ENCODE measurements at regions of chr5 and their contacts with region 1.

Region 1: DNA sequence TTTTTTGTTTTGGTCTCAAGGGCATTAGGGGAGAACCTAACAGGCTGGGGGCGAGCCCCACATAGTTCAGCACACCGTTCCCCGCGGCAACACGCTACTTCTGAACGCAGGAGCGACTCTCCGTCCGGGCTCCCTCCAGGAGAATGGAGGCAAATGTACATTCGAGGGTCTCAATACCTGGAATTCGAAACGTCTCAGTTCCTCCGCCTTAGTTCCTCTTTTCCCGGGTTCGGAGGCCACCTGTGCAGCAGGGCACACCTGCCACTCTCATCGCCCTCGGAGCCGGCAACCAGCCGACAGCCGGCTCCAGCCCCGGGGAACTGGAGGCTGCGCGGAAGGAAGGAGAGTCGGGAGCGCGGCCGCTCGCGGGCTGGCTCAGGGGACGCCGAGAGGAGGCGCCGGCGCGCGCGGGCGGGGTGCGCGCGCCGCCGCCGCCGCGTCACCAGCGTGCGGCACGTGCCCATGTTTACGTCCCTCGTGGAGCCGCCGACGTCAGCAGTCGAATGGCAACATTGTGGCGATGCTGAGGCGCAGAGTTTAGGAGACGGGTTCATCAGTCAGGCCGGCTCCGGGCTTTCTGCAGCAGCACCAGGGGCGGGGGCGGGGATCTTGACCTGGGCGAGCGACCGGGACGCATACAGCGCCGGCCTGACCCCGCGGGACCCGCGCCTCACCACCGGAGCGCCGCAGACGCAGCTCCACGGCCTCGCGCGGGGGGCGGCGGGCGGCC is at the start of gene JMY:
- DNase-seq: peak; percentile 80
- H3K4me3 ChIP-seq: peak within 1 kb of the TSS; percentile 68 to 90 (median 87)
- H3K27ac ChIP-seq: peak within 1 kb of the TSS; percentile 76
- H3K4me1 ChIP-seq: no peaks in the 10 kb centered on the region
- H3K27me3 ChIP-seq: no peaks in the 10 kb centered on the region
- CTCF ChIP-seq: no peak
- total RNA-seq, gene JMY: 7.5 to 16.8 TPM

Region 2: GRCh38 chr5:79200573-79201183 is 35.1 kb before region 1 on chr5:
- CTCF ChIA-PET with region 1: no interaction called
- dilution Hi-C with region 1: no loop called
- in situ Hi-C with region 1: no loop called
- intact Hi-C with region 1: loop called (anchors 2 kb)
- DNase-seq: no peak
- H3K4me3 ChIP-seq: no peak overlapping the region
- H3K27ac ChIP-seq: no peak overlapping the region
- H3K4me1 ChIP-seq: no peaks in the 10 kb centered on the region
- H3K27me3 ChIP-seq: no peaks in the 10 kb centered on the region
- CTCF ChIP-seq: peak; percentile 45 to 46

Region 3: DNA sequence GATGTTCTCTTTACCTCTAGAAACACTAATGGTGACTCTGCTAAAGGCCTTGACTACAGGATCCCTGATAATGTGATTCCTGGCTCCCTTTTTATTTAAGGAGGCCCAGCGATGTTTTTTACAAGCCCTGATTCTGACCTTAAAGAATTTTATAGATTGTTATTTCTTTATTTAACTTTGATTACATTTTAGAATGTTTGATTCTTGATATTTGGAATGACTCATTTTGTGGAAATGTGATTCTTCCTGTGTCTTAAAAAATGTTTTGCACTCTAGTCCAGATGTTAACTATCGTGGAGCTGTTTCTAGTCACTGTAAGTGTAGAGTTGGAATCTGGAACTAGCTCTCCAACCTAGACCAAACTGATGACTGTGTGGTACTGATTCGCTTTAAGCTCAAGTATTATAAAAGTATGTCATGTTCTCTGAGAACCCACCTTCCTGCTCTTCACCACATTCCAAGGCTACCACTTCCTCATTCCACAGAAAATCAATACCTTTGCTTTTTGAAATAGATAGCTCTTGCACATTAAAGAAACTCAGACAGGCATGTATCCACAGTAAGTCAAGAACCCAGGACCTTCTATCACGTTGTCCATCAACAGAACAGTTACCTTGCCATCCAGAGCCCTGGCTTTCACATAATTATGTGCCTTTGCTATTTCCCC is 65.4 kb after region 1 on chr5:
- CTCF ChIA-PET with region 1: no interaction called
- dilution Hi-C with region 1: no loop called
- in situ Hi-C with region 1: no loop called
- intact Hi-C with region 1: loop called (anchors 5 kb)
- DNase-seq: no peak
- H3K4me3 ChIP-seq: no peak overlapping the region
- H3K27ac ChIP-seq: no peak overlapping the region
- H3K4me1 ChIP-seq: peaks cover 15% of the 10 kb centered on the region
- H3K27me3 ChIP-seq: no peaks in the 10 kb centered on the region
- CTCF ChIP-seq: no peak

Region 4: GRCh38 chr5:79464695-79465332 is 229.0 kb after region 1 on chr5:
- CTCF ChIA-PET with region 1: no interaction called
- dilution Hi-C with region 1: no loop called
- in situ Hi-C with region 1: no loop called
- intact Hi-C with region 1: loop called (anchors 5 kb)
- DNase-seq: peak; percentile 2
- H3K4me3 ChIP-seq: no peak overlapping the region
- H3K27ac ChIP-seq: no peak overlapping the region
- H3K4me1 ChIP-seq: no peaks in the 10 kb centered on the region
- H3K27me3 ChIP-seq: no peaks in the 10 kb centered on the region
- CTCF ChIP-seq: peak; percentile 51 to 66

Region 5: GRCh38 chr5:79514391-79515105 is 278.7 kb after region 1 on chr5:
- CTCF ChIA-PET with region 1: no interaction called
- dilution Hi-C with region 1: no loop called
- in situ Hi-C with region 1: no loop called
- intact Hi-C with region 1: loop called (anchors 2 kb)
- DNase-seq: peak; percentile 95
- H3K4me3 ChIP-seq: peak overlapping the region; percentile 73 to 77 (median 74)
- H3K27ac ChIP-seq: peak overlapping the region; percentile 85
- H3K4me1 ChIP-seq: peaks cover 15% of the 10 kb centered on the region
- H3K27me3 ChIP-seq: no peaks in the 10 kb centered on the region
- CTCF ChIP-seq: no peak